Activated CD4-positive, alpha-beta memory T cell treated with anti-CD3 and anti-CD28 coated beads for 36 hours (primary cell): ENCODE measurements at regions of chr10 and their contacts with region 1.

Region 1: DNA sequence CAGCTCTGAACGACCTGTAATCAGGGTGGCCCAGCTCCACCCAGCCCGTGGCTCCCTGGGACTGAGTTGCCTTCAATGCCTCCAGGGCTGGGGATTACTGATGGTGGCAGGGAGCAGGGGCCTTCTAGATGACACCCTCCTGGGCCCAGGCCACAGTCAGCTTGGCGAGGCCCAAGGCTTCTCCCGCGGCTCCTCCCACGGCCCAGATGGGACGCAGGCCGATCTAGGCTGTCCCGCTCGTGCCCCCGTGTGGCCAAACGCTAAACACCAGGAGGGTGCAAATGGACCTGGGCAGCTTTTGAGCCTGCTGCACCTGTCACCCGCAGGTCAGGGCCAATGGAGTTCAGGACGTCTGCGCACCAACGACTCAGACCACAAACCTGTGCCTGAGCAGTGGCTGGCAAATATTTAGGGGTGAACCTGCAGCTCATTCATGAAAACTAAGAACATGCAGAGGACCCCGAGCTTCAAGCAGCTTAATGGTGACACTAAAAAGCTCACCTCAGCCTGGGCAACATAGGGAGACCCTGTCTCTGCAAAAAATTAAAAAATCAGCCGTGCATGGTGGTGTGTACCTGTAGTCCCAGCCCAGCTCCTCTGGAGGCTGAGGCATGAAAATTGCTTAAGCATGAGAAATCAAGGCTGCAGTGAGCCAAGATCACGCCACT is 43.2 kb downstream of the ASB13 start:
- DNase-seq: peak; percentile 90
- H3K4me3 Mint-ChIP-seq: no peak overlapping the region
- H3K27ac Mint-ChIP-seq: no peak overlapping the region
- H3K4me1 Mint-ChIP-seq: peaks cover 10% of the 10 kb centered on the region
- H3K27me3 Mint-ChIP-seq: peaks cover 1% of the 10 kb centered on the region

Region 2: GRCh38 chr10:5284311-5285057 is 338.7 kb before region 1 on chr10:
- CTCF ChIA-PET with region 1: no interaction called
- POLR2A ChIA-PET with region 1: no interaction called
- intact Hi-C with region 1: no loop called
- DNase-seq: peak; percentile 45
- H3K4me3 Mint-ChIP-seq: peak overlapping the region; percentile 31
- H3K27ac Mint-ChIP-seq: peak overlapping the region; percentile 83
- H3K4me1 Mint-ChIP-seq: peaks cover 42% of the 10 kb centered on the region
- H3K27me3 Mint-ChIP-seq: no peaks in the 10 kb centered on the region

Region 3: DNA sequence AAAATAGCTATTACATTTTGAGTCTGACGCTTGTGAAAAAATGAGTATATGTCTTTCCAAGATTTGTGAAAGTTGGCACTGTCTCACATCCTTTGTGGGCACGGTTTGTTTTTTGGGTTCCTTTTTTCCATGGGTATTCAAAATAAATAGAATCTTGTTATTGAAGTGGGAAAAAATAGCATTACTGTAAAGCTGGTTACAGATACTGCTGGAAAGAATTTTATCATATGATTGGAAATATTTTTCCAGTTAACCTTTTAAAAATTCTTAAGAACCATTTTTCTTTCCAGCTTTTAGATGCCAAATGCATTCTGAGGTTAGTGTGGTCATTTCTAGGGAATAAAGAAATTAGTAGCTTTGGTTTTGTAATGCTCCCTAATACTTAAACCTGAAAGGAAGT is 199.4 kb before region 1 on chr10:
- CTCF ChIA-PET with region 1: interaction called, 17 read pairs
- POLR2A ChIA-PET with region 1: no interaction called
- intact Hi-C with region 1: no loop called
- DNase-seq: no peak
- H3K4me3 Mint-ChIP-seq: no peak overlapping the region
- H3K27ac Mint-ChIP-seq: no peak overlapping the region
- H3K4me1 Mint-ChIP-seq: peaks cover 3% of the 10 kb centered on the region
- H3K27me3 Mint-ChIP-seq: no peaks in the 10 kb centered on the region

Region 4: GRCh38 chr10:5466418-5467154 is 156.6 kb before region 1 on chr10:
- CTCF ChIA-PET with region 1: interaction called, 19 read pairs
- POLR2A ChIA-PET with region 1: no interaction called
- intact Hi-C with region 1: no loop called
- DNase-seq: no peak
- H3K4me3 Mint-ChIP-seq: no peak overlapping the region
- H3K27ac Mint-ChIP-seq: no peak overlapping the region
- H3K4me1 Mint-ChIP-seq: no peaks in the 10 kb centered on the region
- H3K27me3 Mint-ChIP-seq: no peaks in the 10 kb centered on the region

Region 5: DNA sequence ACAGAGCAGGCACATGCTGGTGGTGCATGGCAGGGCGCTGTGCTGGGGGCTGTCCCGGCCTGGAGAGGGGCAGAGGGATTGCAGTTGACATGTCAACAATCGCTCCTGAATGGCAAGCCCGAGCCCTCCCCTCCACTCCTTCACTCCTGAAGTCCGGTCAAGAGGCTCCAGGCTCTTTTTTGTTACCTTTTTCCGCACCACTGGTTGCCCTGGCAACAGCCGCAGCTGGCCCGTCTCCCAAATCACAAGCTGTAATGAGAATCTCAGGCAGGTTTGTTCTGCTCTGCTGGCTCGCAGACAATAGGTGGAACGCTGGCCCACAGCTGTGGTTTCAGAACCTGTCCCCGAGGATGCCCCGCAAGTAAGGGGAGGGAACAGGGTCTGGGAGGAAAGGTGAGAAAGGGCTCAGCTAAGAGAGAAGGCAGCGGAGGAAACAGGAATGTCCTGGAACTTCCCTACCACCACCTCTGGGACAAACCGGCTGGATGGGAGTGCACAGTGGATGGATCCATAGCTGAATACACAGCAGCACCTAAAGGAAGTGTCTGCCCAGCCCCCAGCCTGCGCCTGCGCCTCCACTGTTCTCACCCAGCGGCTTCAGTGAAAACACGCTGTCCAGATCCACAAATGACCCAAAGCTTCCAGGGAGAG is 39.6 kb before region 1 on chr10:
- CTCF ChIA-PET with region 1: interaction called, 18 read pairs
- POLR2A ChIA-PET with region 1: no interaction called
- intact Hi-C with region 1: no loop called
- DNase-seq: no peak
- H3K4me3 Mint-ChIP-seq: no peak overlapping the region
- H3K27ac Mint-ChIP-seq: no peak overlapping the region
- H3K4me1 Mint-ChIP-seq: peaks cover under 1% of the 10 kb centered on the region
- H3K27me3 Mint-ChIP-seq: peaks cover under 1% of the 10 kb centered on the region